ENCODE measurements at regions of chr3 and their contacts with region 1.

Region 1: GRCh38 chr3:42572278-42572677 is 9.5 kb downstream of the SEC22C start:
- DNase-seq: peak; percentile 37 to 75 (median 60)
- ATAC-seq: peak; percentile 99
- H3K4me3 ChIP-seq: no peak overlapping the region
- H3K27ac ChIP-seq: no peak overlapping the region
- H3K4me1 ChIP-seq: no peaks in the 10 kb centered on the region; a peak in 1 of 5 replicates
- H3K27me3 ChIP-seq: no peaks in the 10 kb centered on the region
- CTCF ChIP-seq: peak; percentile 84 to 88 (median 86)
- EP300 ChIP-seq: no peak
- POLR2A ChIP-seq: no peak
- RAD21 ChIP-seq: peak; percentile 53 to 83

Region 2: DNA sequence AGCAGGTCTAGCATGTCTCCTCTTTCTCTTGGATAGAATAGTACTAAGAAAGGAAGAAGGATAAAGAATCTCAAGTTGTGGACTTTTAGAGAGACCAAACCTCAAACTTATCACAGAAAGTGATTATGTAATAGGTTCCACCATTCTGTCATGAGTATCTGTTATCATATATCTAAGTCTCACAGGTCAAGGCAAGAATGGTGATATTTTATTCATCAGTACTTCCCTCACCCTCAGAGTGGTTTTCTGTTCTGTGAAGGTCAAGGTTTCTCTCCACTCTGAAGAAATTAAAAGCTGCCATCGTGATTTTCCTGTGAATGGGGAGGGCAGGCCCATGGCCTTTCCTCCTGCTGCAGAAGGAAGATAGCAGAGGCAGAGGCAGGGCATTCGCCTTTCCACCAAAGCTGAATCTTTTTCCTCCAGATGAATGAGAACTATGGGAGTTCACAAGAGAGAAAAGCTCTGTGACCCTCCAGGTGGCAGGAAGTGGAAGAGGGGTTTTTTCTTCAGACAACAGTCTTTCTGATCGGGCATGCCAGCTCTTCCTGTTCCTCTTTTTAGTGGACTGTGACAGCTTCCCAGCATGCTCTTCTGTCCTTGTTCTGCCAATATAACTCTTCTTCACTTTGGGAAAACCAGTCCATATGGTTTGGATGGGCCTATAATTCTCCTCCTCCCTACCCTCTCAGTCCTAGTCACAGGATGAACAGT is 269.2 kb before region 1 on chr3:
- CTCF ChIA-PET with region 1: no interaction called
- POLR2A ChIA-PET with region 1: no interaction called
- in situ Hi-C with region 1: no loop called
- intact Hi-C with region 1: no loop called
- DNase-seq: no peak
- ATAC-seq: no peak
- H3K4me3 ChIP-seq: no peak overlapping the region
- H3K27ac ChIP-seq: no peak overlapping the region
- H3K4me1 ChIP-seq: no peaks in the 10 kb centered on the region
- H3K27me3 ChIP-seq: peaks cover 0 to 2% of the 10 kb centered on the region in 2 experiments; a peak in 2 of 5 replicates
- CTCF ChIP-seq: no peak
- EP300 ChIP-seq: no peak
- POLR2A ChIP-seq: no peak
- RAD21 ChIP-seq: no peak

Region 3: DNA sequence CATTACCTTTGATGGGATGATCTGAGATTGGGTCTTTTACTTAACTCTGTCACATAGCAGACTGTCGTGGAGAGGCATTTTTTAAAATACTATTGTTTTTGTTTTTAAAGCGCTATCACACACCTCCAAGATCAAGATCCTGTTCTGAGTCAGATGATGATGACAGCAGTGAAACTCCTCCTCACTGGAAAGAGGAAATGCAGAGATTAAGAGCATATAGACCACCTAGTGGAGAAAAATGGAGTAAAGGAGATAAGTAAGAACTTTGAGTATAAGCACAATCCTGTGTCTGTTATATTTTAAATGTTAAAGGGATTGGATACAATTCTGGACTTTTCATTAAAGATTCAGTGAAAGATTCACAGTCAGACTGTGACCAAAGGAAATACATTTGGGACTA is 62.8 kb after region 1 on chr3:
- CTCF ChIA-PET with region 1: interaction called, 13 read pairs
- POLR2A ChIA-PET with region 1: no interaction called
- in situ Hi-C with region 1: loop called (anchors 5 kb)
- intact Hi-C with region 1: loop called (anchors 2 kb)
- DNase-seq: peak in 3 of 4 experiments; percentile 41 to 58 (median 58)
- ATAC-seq: peak; percentile 88
- H3K4me3 ChIP-seq: no peak overlapping the region
- H3K27ac ChIP-seq: no peak overlapping the region
- H3K4me1 ChIP-seq: no peaks in the 10 kb centered on the region; a peak in 1 of 5 replicates
- H3K27me3 ChIP-seq: no peaks in the 10 kb centered on the region
- CTCF ChIP-seq: peak; percentile 33 to 69 (median 42); a peak in 4 of 6 replicates
- EP300 ChIP-seq: peak; percentile 52
- POLR2A ChIP-seq: no peak
- RAD21 ChIP-seq: peak; percentile 56 to 74

Region 4: GRCh38 chr3:42749753-42750231 is 177.5 kb after region 1 on chr3:
- CTCF ChIA-PET with region 1: no interaction called
- POLR2A ChIA-PET with region 1: interaction called, 3 read pairs
- in situ Hi-C with region 1: loop called (anchors 10 kb)
- intact Hi-C with region 1: loop called (anchors 2 kb)
- DNase-seq: peak; percentile 58 to 72 (median 62)
- ATAC-seq: peak; percentile 90
- H3K4me3 ChIP-seq: no peak overlapping the region
- H3K27ac ChIP-seq: no peak overlapping the region
- H3K4me1 ChIP-seq: no peaks in the 10 kb centered on the region; a peak in 1 of 5 replicates
- H3K27me3 ChIP-seq: peaks cover 8 to 56% of the 10 kb centered on the region in 2 experiments; a peak in 4 of 5 replicates
- CTCF ChIP-seq: peak; percentile 84 to 90 (median 88)
- EP300 ChIP-seq: no peak
- POLR2A ChIP-seq: no peak
- RAD21 ChIP-seq: peak; percentile 61 to 79

Region 5: GRCh38 chr3:42839616-42840015 is 267.3 kb after region 1 on chr3:
- CTCF ChIA-PET with region 1: no interaction called
- POLR2A ChIA-PET with region 1: no interaction called
- in situ Hi-C with region 1: no loop called
- intact Hi-C with region 1: loop called (anchors 10 kb)
- DNase-seq: peak; percentile 69 to 86 (median 75)
- ATAC-seq: peak; percentile 92
- H3K4me3 ChIP-seq: no peak overlapping the region
- H3K27ac ChIP-seq: no peak overlapping the region
- H3K4me1 ChIP-seq: peaks cover 10 to 26% of the 10 kb centered on the region in 2 experiments
- H3K27me3 ChIP-seq: peaks cover 0 to under 1% of the 10 kb centered on the region in 2 experiments; a peak in 2 of 5 replicates
- CTCF ChIP-seq: peak; percentile 75 to 98 (median 94)
- EP300 ChIP-seq: no peak
- POLR2A ChIP-seq: no peak
- RAD21 ChIP-seq: peak; percentile 77 to 83

Region 6: GRCh38 chr3:42880601-42881451 is 308.5 kb after region 1 on chr3:
- CTCF ChIA-PET with region 1: no interaction called
- POLR2A ChIA-PET with region 1: no interaction called
- in situ Hi-C with region 1: no loop called
- intact Hi-C with region 1: loop called (anchors 10 kb)
- DNase-seq: peak; percentile 94 to 97 (median 95)
- ATAC-seq: peak; percentile 100
- H3K4me3 ChIP-seq: peak overlapping the region; percentile 42
- H3K27ac ChIP-seq: no peak overlapping the region
- H3K4me1 ChIP-seq: peaks cover 0 to 12% of the 10 kb centered on the region in 2 experiments; a peak in 3 of 5 replicates
- H3K27me3 ChIP-seq: peaks cover 3 to 15% of the 10 kb centered on the region in 2 experiments; a peak in 3 of 5 replicates
- CTCF ChIP-seq: peak; percentile 96 to 98 (median 96)
- EP300 ChIP-seq: no peak; the same call in 1 of the 2 replicates
- POLR2A ChIP-seq: peak; percentile 40
- RAD21 ChIP-seq: peak; percentile 99 to 100